Gastrocnemius medialis (tissue), 4 donors: ENCODE measurements at regions of chr9 and their contacts with region 1.

Region 1: DNA sequence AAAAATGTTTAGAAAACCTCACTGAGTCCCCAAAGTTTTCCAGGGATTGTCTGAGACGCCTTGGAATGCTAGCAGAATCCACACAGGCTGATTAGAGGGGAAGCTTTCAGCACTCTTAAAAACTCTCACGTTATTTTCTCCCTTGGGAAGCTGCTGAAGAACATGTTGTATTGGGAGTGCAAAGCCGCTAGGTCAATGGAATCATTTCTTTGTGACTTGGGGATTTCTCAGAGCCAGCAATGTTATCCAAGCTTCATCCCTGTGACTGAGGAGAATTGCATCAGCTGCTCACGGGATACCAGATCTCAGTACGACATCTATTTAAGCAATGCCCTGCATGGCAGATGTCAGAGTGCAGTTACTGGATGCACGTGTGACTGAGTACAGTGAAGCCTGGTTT is 426.4 kb upstream of the MPDZ start:
- DNase-seq: peak; percentile 86
- ATAC-seq: peak; percentile 100
- H3K4me3 ChIP-seq: no peak overlapping the region
- H3K27ac ChIP-seq: peak overlapping the region; percentile 59 to 75 (median 72)
- H3K4me1 ChIP-seq: peaks cover 10 to 11% of the 10 kb centered on the region in 2 donors
- H3K27me3 ChIP-seq: no peaks in the 10 kb centered on the region
- CTCF ChIP-seq: no peak
- POLR2A ChIP-seq: peak in 1 of 2 donors; percentile 14

Region 2: DNA sequence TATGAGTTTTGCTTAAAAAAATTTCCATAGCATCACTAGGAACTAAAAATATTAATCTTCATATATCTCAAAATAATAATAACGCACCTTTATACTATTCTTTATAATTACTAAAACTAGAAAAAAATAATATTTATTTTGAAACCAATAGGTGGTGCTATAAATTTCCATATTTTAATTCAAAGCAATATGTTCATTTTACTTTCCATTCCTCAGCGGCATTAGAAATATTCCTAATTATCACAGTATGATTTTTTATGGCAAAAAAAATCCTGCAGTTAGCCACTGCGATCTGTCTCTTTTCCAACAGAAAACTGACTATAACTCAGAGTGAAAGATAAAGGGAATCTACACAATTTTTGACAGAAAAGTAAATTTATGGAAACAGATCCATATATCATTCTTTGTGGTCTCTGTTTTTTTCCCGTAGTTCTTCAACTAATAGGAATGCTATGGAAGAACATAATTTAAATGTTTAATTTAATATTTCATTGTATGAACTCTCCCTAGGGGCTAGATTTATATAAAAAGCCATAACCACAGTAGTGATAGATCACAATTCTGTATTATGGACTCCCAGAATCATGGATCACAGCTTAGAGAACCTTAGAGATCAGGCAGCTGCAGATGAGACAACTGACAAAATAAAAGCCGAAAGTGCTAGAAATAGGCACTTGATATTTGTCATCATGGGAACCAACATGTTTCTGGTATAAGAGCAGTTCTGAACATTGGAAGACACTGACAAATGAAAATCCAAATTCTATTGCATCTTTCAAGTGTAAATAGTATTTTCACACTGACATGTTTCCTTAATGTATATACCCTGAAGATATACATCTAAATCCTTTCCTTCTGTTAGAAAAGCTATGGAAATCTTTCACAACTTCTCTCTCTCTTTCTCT is 258.7 kb before region 1 on chr9:
- in situ Hi-C with region 1: loop called in 1 of 4 experiments (anchors 10 kb)
- intact Hi-C with region 1: no loop called
- DNase-seq: no peak
- ATAC-seq: no peak
- H3K4me3 ChIP-seq: peak overlapping the region in 3 of 4 donors; percentile 5 to 37 (median 19)
- H3K27ac ChIP-seq: peak overlapping the region; percentile 50 to 67 (median 62)
- H3K4me1 ChIP-seq: peaks cover 39 to 42% of the 10 kb centered on the region in 2 donors
- H3K27me3 ChIP-seq: no peaks in the 10 kb centered on the region
- CTCF ChIP-seq: peak in 2 of 5 experiments; percentile 23 to 46
- POLR2A ChIP-seq: no peak

Region 3: GRCh38 chr9:13787234-13787833 is 81.4 kb after region 1 on chr9:
- in situ Hi-C with region 1: no loop called
- intact Hi-C with region 1: loop called (anchors 5 kb)
- DNase-seq: peak; percentile 25 to 42
- ATAC-seq: peak; percentile 94 to 96
- H3K4me3 ChIP-seq: peak overlapping the region; percentile 37 to 45 (median 40)
- H3K27ac ChIP-seq: peak overlapping the region; percentile 73 to 84 (median 75)
- H3K4me1 ChIP-seq: peaks cover 19 to 21% of the 10 kb centered on the region in 2 donors
- H3K27me3 ChIP-seq: no peaks in the 10 kb centered on the region
- CTCF ChIP-seq: no peak
- POLR2A ChIP-seq: no peak

Region 4: GRCh38 chr9:14030375-14031059 is 324.6 kb after region 1 on chr9:
- in situ Hi-C with region 1: no loop called
- intact Hi-C with region 1: loop called (anchors 5 kb)
- DNase-seq: peak; percentile 40 to 43
- ATAC-seq: peak; percentile 66 to 68
- H3K4me3 ChIP-seq: peak overlapping the region; percentile 20 to 46 (median 38)
- H3K27ac ChIP-seq: peak overlapping the region; percentile 83 to 91 (median 85)
- H3K4me1 ChIP-seq: peaks cover 43 to 66% of the 10 kb centered on the region in 2 donors
- H3K27me3 ChIP-seq: no peaks in the 10 kb centered on the region
- CTCF ChIP-seq: no peak
- POLR2A ChIP-seq: no peak

Region 5: DNA sequence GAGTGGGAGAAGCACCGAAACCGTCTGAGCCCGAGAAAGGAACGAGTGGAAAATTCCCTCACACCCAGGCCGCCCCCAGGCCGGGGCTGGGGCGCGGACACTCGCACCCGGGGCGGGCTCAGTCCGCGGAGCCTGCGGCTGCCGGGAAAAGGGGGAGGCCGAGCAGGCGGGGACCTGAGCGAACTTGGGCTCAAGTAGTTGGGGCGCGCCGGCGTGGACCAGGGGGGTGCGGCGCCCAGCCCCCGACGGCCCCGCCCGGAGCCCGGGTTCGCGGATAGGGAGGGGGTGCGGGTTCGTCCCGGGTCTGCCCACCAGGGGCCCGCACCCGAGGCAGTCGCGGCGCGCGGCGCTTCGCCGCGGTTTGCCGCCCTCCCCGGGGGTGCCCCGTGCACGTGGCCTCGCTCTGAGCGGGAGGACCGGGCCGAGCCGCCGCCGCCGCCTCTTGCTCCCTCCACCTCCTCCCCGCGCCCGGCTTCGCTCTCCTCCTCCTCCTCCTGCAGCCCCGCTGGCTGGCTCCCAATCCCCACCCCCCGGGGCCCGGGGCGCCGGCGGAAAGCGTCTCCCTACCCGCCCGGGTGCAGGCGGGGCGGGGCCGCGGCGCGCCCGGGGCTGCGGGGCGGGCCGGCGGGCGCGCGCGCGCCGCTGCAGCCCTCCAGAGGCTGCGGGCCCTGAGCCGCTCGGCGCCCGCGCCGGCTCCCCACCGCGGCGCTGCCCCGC is 609.2 kb after region 1 on chr9:
- in situ Hi-C with region 1: no loop called
- intact Hi-C with region 1: loop called (anchors 5 kb)
- DNase-seq: peak; percentile 91 to 95
- ATAC-seq: peak; percentile 43 to 51
- H3K4me3 ChIP-seq: peak overlapping the region; percentile 81 to 91 (median 86)
- H3K27ac ChIP-seq: peak overlapping the region; percentile 92 to 99 (median 98)
- H3K4me1 ChIP-seq: peaks cover 40 to 43% of the 10 kb centered on the region in 2 donors
- H3K27me3 ChIP-seq: no peaks in the 10 kb centered on the region
- CTCF ChIP-seq: peak in 2 of 5 experiments; percentile 15 to 22
- POLR2A ChIP-seq: peak; percentile 88 to 92

Region 6: DNA sequence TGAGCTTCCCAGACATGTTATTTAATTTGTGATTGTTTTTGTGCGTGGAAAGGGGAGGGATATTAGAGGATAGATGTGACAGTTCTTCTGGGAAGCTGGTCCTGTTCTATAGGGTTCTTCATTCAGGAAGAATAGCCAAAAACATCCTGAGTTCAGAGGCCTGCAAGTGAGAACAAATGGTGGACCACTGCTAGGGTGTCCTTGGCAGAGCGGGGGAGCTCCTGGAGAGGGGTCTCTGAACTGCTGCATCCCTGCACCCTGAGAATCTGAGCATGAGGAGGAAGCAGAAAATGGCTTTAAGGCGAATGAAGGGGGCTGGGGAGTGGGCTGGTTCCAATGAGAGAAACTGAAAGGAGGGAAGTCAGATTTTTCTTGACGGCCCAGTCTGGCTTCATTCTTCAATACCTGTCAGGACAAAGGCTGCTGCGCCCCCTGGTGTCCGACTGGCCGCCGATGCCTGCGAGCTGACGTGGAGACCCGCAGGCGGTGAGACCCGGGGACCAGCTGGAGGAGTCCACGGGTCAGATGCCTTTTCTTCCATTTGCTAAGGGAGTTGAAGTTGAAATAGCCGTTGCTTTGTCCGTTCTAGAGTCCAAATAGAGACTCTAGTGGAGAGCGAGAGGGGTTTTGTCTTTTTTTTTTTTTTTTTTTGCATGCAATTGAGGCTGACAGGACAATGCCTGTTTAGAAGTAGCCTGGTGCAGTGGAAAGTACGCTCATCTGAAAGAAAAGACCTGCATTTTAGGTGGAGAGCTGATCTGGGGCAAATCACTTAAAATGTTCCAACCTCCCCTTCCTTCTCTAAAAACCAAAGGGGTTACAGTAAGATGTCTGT is 647.5 kb after region 1 on chr9:
- in situ Hi-C with region 1: loop called in 1 of 4 experiments (anchors 25 kb)
- intact Hi-C with region 1: loop called (anchors 5 kb)
- DNase-seq: peak; percentile 86 to 89
- ATAC-seq: peak; percentile 66 to 69
- H3K4me3 ChIP-seq: peak overlapping the region; percentile 15 to 40 (median 36)
- H3K27ac ChIP-seq: peak overlapping the region; percentile 84 to 90 (median 87)
- H3K4me1 ChIP-seq: peaks cover 19 to 24% of the 10 kb centered on the region in 2 donors
- H3K27me3 ChIP-seq: no peaks in the 10 kb centered on the region
- CTCF ChIP-seq: peak; percentile 87 to 95 (median 92)
- POLR2A ChIP-seq: no peak